ENCODE measurements at regions of chr18 and their contacts with region 1.

Region 1: GRCh38 chr18:61475931-61476330 is 142.7 kb downstream of the CDH20 start:
- DNase-seq: no peak
- H3K4me3 ChIP-seq: no peak overlapping the region
- CTCF ChIP-seq: no peak
- POLR2A ChIP-seq: no peak

Region 2: GRCh38 chr18:61435064-61435652 is 40.8 kb before region 1 on chr18:
- intact Hi-C with region 1: loop called (anchors 1 kb)
- DNase-seq: no peak
- H3K4me3 ChIP-seq: no peak overlapping the region
- CTCF ChIP-seq: no peak
- POLR2A ChIP-seq: no peak